ENCODE measurements at regions of chr4 and their contacts with region 1.

Region 1: GRCh38 chr4:16264798-16265197 is 38.5 kb upstream of the TAPT1 start:
- DNase-seq: no peak
- ATAC-seq: peak in 7 of 8 donors; percentile 59 to 82 (median 76)
- H3K4me3 ChIP-seq: no peak overlapping the region
- H3K27ac ChIP-seq: no peak overlapping the region
- H3K4me1 ChIP-seq: peaks cover 0 to 16% (median 0%) of the 10 kb centered on the region in 9 donors
- H3K27me3 ChIP-seq: no peaks in the 10 kb centered on the region
- CTCF ChIP-seq: peak; percentile 31 to 81 (median 70)

Region 2: DNA sequence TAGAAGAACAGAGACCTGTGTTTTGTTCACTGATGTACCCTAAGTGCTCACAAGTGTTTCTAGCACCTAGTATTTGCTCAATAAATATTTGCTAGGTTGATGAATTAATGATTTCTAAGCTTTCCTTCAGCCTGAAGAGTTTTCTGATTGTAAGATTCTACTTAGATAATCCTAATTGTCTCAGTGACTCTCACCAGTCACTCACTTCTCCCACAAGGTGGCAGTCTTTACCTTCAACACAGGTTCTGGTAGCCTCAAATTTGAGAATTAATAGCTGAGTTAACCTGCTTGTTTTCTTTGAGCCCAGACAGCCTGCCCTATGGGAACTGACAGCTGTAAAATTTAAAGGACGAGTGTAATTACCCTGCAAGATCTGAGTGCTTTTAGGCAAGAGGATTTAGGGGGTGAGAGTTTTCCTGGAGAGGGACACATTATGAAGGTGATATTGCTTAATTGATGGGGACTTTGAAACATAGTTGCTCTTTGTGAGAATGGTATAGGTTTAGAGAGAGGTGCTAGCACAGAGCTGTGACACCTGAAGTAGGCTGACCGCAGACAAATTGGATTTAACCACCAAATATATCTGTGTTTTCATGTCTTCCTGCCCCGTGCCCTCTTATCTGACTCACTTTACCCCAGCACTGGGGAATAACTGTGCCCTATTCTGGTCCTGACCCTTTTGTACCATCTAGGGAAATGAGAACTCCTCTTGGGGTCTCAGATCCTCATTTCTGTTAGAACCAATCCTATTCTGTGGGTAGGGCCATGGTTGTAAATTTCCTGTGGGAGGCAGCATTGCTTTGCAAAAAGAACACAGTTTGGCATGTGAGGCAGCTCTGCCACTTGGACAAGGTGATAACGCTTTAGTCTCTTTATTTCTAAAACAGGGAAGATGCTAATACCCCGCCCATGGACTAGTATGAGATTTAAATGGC is 458.9 kb before region 1 on chr4:
- intact Hi-C with region 1: loop called in 2 of 10 experiments (anchors 10 kb)
- DNase-seq: peak in 1 of 2 donors; percentile 30
- ATAC-seq: peak in 7 of 8 donors; percentile 15 to 78 (median 67)
- H3K4me3 ChIP-seq: no peak overlapping the region
- H3K27ac ChIP-seq: no peak overlapping the region
- H3K4me1 ChIP-seq: peaks cover 0 to 29% (median 3%) of the 10 kb centered on the region in 9 donors
- H3K27me3 ChIP-seq: no peaks in the 10 kb centered on the region
- CTCF ChIP-seq: peak; percentile 47 to 78 (median 72)

Region 3: GRCh38 chr4:16196478-16197393 is 68.1 kb before region 1 on chr4:
- intact Hi-C with region 1: loop called in 5 of 10 experiments (anchors 2 to 10 kb)
- DNase-seq: peak in 1 of 2 donors; percentile 31
- ATAC-seq: peak; percentile 73 to 93 (median 84)
- H3K4me3 ChIP-seq: peak overlapping the region in 7 of 10 donors; percentile 4 to 34 (median 26)
- H3K27ac ChIP-seq: peak overlapping the region in 9 of 10 donors; percentile 19 to 73 (median 41)
- H3K4me1 ChIP-seq: peaks cover 0 to 65% (median 55%) of the 10 kb centered on the region in 9 donors
- H3K27me3 ChIP-seq: no peaks in the 10 kb centered on the region
- CTCF ChIP-seq: peak in 7 of 9 donors; percentile 39 to 67 (median 51)

Region 4: DNA sequence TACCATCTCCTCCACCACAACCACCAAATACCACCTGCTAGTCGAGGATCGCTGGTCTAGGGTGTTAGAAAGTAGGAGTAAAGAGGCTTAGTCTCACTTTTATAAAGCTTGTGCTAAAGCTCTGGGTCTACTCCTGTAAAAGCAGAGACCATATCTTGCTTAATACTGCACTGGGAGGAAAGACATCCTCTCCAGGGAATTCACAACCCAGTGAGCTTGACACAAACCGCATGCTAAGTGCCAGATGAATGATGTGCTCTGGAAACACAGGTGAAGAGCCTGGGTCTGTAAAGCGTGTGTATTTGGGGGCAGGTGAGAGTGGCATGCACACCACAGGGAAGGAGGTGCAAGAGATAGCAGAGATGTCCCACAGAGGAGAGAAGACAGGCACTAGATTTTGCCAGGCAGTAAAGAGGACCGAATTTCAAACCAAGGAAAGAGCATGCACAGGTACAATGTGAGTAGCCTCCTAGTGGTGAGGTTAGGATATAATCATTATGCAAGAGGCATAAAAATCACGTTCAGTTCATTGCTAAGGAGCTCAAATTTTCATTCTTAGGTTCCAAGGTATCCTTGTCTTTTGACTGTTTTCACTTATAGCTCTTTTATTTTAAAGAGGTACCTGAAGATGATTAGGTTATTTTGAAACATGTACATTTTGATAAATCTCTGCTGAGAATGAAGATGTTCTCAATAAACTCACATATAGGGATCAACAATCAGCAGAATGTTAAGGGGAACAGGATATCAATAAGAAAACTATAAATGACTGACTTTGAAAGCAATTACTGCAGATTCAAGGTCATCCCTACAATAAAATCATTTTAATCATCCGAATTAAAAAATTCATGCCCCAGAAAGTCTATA is 59.3 kb before region 1 on chr4:
- intact Hi-C with region 1: loop called in 2 of 10 experiments (anchors 5 kb)
- DNase-seq: no peak
- ATAC-seq: peak in 4 of 8 donors; percentile 39 to 59 (median 48)
- H3K4me3 ChIP-seq: no peak overlapping the region
- H3K27ac ChIP-seq: no peak overlapping the region
- H3K4me1 ChIP-seq: peaks cover 0 to 60% (median 20%) of the 10 kb centered on the region in 9 donors
- H3K27me3 ChIP-seq: no peaks in the 10 kb centered on the region
- CTCF ChIP-seq: peak in 7 of 9 donors; percentile 47 to 61 (median 51)

Region 5: GRCh38 chr4:16384576-16384975 is 119.8 kb after region 1 on chr4:
- intact Hi-C with region 1: no loop called
- DNase-seq: no peak
- ATAC-seq: peak in 4 of 8 donors; percentile 20 to 62 (median 22)
- H3K4me3 ChIP-seq: no peak overlapping the region
- H3K27ac ChIP-seq: peak overlapping the region in 1 of 10 donors; percentile 3
- H3K4me1 ChIP-seq: peaks cover 0 to 5% (median 0%) of the 10 kb centered on the region in 9 donors
- H3K27me3 ChIP-seq: no peaks in the 10 kb centered on the region
- CTCF ChIP-seq: peak in 2 of 9 donors; percentile 7 to 13